Activated CD4-positive, alpha-beta T cell treated with anti-CD3 and anti-CD28 coated beads for 36 hours (primary cell): ENCODE measurements at regions of chr16 and their contacts with region 1.

Region 1: GRCh38 chr16:4330277-4330874 is 14.5 kb downstream of the GLIS2 start:
- DNase-seq: peak; percentile 86
- ATAC-seq: peak; percentile 80
- H3K4me3 Mint-ChIP-seq: no peak overlapping the region
- H3K27ac Mint-ChIP-seq: no peak overlapping the region
- H3K4me1 Mint-ChIP-seq: no peaks in the 10 kb centered on the region
- H3K27me3 Mint-ChIP-seq: no peaks in the 10 kb centered on the region

Region 2: DNA sequence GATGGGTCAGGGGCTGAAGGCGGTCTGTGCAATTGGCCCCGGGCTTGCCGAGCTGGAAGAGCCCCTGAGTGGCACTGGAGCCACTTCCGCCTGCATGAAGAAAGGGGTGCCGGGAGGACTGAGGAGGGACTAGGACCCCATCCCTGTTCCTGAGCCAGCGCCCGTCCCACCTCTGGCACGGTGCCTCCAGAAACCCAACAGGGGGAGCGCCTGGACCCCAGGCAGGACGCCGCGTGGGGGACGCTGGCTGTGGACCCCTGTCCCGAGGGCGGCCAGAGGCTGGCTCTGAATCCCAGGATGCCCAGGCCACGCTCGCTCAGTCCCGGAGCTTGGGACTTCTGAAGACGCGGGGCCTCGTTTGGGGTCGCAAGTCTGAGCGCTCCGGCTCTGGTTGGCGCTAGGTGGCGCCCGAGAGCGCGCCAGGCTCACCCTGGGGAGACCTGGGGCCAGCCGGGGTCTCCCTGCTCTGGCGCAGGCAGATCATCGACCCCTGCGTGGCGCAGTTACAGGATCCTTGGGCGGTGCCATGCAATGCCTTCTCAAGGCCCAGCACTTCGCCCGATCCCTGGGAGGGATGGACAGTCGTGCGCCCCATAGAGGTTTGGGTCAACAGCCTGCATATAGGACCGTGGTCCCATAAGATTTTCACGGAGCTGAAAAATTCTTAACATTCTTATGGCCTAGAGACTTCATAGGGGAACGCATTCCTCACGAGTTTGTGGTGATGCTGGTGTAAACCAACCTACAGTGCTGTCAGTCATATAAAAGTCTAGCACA is 391.3 kb before region 1 on chr16:
- CTCF ChIA-PET with region 1: no interaction called
- POLR2A ChIA-PET with region 1: no interaction called
- intact Hi-C with region 1: loop called in 1 of 2 experiments (anchors 5 kb)
- DNase-seq: peak; percentile 79
- ATAC-seq: peak; percentile 91
- H3K4me3 Mint-ChIP-seq: no peak overlapping the region
- H3K27ac Mint-ChIP-seq: no peak overlapping the region
- H3K4me1 Mint-ChIP-seq: peaks cover 2% of the 10 kb centered on the region
- H3K27me3 Mint-ChIP-seq: peaks cover 4% of the 10 kb centered on the region

Region 3: GRCh38 chr16:3983081-3983520 is 347.3 kb before region 1 on chr16:
- CTCF ChIA-PET with region 1: interaction called, 3 read pairs
- POLR2A ChIA-PET with region 1: interaction called, 3 read pairs
- intact Hi-C with region 1: loop called in 1 of 2 experiments (anchors 1 kb)
- DNase-seq: peak; percentile 74
- ATAC-seq: peak; percentile 94
- H3K4me3 Mint-ChIP-seq: no peak overlapping the region
- H3K27ac Mint-ChIP-seq: no peak overlapping the region
- H3K4me1 Mint-ChIP-seq: peaks cover 2% of the 10 kb centered on the region
- H3K27me3 Mint-ChIP-seq: no peaks in the 10 kb centered on the region

Region 4: DNA sequence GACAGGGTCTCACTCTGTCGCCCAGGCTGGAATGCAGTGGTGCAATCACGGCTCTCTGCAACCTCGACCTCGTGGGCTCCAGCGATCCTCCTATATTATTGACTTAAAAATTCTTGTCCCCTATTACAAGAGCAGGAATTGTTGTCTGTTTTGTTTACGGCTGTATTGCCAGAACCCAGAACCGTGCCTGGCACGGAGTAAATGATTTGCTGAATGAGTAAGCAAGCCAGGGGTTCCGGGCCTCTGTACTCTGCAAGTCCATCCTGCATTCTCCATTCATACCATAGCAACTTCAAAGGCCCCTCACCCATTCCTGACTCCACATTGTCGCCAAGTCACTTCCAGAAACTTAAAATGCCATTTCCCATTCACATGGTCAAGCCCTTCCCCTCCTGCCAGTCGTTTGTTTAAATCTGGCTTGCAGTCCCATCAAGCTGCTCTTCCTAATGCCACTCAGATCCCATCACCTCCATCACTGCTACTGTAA is 221.1 kb before region 1 on chr16:
- CTCF ChIA-PET with region 1: no interaction called
- POLR2A ChIA-PET with region 1: no interaction called
- intact Hi-C with region 1: no loop called
- DNase-seq: no peak
- ATAC-seq: no peak
- H3K4me3 Mint-ChIP-seq: no peak overlapping the region
- H3K27ac Mint-ChIP-seq: no peak overlapping the region
- H3K4me1 Mint-ChIP-seq: peaks cover 32% of the 10 kb centered on the region
- H3K27me3 Mint-ChIP-seq: no peaks in the 10 kb centered on the region

Region 5: GRCh38 chr16:4200000-4200780 is 130.2 kb before region 1 on chr16:
- CTCF ChIA-PET with region 1: interaction called, 3 read pairs
- POLR2A ChIA-PET with region 1: no interaction called
- intact Hi-C with region 1: loop called in 1 of 2 experiments (anchors 1 kb)
- DNase-seq: peak; percentile 53
- ATAC-seq: peak; percentile 55
- H3K4me3 Mint-ChIP-seq: no peak overlapping the region
- H3K27ac Mint-ChIP-seq: no peak overlapping the region
- H3K4me1 Mint-ChIP-seq: peaks cover 3% of the 10 kb centered on the region
- H3K27me3 Mint-ChIP-seq: peaks cover 4% of the 10 kb centered on the region

Region 6: DNA sequence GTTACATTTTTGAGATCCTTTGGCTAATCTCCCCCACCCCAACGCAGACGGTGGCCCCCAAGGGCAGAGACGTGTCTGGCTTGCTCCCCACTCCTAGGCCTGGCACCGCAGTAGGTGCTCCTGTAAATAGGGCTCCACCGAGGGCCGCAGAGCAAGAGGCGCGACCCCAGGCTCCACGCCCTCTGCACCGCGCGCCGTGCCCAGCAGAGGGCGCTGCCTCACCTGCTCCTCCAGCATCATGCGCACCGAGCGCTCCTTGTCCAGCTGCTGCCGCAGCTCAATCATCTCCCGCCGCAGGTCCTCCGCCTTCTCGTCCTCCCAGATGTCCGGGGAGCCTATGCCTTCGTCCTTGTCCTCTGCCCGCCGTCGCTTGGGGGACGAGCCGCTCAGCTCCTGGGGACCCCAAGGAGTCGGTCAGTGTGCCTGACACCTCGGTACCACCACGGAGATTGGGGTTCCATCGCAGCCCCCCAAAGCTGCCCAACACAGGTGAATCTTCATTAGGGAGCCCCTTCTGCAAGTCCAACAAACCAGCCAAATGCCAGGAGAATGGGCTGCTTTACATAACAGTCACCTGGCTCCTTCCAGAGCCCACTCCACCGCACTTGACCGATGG is 68.7 kb before region 1 on chr16:
- CTCF ChIA-PET with region 1: interaction called, 4 read pairs
- POLR2A ChIA-PET with region 1: no interaction called
- intact Hi-C with region 1: loop called in 1 of 2 experiments (anchors 1 kb)
- DNase-seq: peak; percentile 73
- ATAC-seq: peak; percentile 86
- H3K4me3 Mint-ChIP-seq: no peak overlapping the region
- H3K27ac Mint-ChIP-seq: no peak overlapping the region
- H3K4me1 Mint-ChIP-seq: peaks cover 5% of the 10 kb centered on the region
- H3K27me3 Mint-ChIP-seq: no peaks in the 10 kb centered on the region

Region 7: GRCh38 chr16:4288148-4288921 is 42.0 kb before region 1 on chr16:
- CTCF ChIA-PET with region 1: interaction called, 28 read pairs
- POLR2A ChIA-PET with region 1: no interaction called
- intact Hi-C with region 1: loop called (anchors 1 kb)
- DNase-seq: peak; percentile 87
- ATAC-seq: peak; percentile 95
- H3K4me3 Mint-ChIP-seq: no peak overlapping the region
- H3K27ac Mint-ChIP-seq: no peak overlapping the region
- H3K4me1 Mint-ChIP-seq: peaks cover 9% of the 10 kb centered on the region
- H3K27me3 Mint-ChIP-seq: peaks cover 9% of the 10 kb centered on the region

Region 8: GRCh38 chr16:4315186-4316109 is 14.9 kb before region 1 on chr16 and contains the start of gene GLIS2:
- CTCF ChIA-PET with region 1: interaction called, 12 read pairs
- POLR2A ChIA-PET with region 1: no interaction called
- intact Hi-C with region 1: no loop called
- DNase-seq: peak; percentile 45
- ATAC-seq: peak; percentile 20
- H3K4me3 Mint-ChIP-seq: peak within 1 kb of the TSS; percentile 71
- H3K27ac Mint-ChIP-seq: no peak within 1 kb of the TSS
- H3K4me1 Mint-ChIP-seq: peaks cover 11% of the 10 kb centered on the region
- H3K27me3 Mint-ChIP-seq: peaks cover 13% of the 10 kb centered on the region
- total RNA-seq, gene GLIS2: 0.27 to 0.30 TPM

Region 9: DNA sequence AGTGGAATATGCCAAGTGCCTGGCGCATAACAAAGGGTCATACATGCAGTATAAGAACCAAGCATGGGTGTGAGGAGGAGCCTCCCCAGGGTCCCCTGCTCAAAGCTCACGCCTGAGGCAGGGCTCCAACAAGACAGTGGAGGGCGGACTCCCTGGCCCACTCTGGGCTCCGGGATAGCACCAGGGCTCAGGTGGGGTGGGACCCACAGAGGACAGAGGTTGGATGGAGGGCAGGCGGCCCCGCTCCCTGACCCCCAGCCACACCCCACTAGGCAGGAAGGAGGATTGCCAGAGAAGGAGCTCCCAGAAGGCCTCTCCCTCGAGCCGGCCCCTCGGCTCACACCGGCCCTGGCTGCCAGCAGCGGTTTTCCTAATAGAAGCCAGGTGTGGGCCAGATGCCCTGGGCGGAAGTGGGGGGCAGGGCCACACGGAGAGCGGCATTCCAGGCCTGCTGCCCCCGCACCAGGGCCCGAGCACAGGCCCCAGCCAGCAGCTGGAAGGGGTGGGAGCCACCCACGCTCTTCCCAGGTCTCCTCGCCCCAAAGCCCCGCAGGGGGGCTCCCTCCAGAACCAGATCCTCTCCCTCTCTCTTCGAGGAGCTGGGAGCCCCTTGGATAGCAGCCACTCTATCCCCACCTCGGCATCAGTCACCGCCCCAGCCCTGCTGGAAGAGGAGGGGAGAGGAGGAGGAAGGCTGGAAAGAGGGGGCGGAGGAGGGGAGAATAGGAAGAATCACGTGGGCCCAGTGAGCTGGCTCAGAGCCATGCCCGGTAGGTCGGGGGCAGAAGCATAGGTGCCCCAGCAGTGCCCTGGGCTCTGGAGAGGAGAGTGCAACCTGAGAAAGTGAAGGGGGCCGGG is 62.2 kb after region 1 on chr16:
- CTCF ChIA-PET with region 1: no interaction called
- POLR2A ChIA-PET with region 1: no interaction called
- intact Hi-C with region 1: no loop called
- DNase-seq: no peak
- ATAC-seq: no peak
- H3K4me3 Mint-ChIP-seq: no peak overlapping the region
- H3K27ac Mint-ChIP-seq: no peak overlapping the region
- H3K4me1 Mint-ChIP-seq: no peaks in the 10 kb centered on the region
- H3K27me3 Mint-ChIP-seq: no peaks in the 10 kb centered on the region